AG04449 (cell line): ENCODE measurements at regions of chr22 and their contacts with region 1.

Region 1: GRCh38 chr22:37260901-37261336 is 16.9 kb upstream of the RAC2 start:
- DNase-seq: no peak
- H3K4me3 ChIP-seq: no peak overlapping the region
- CTCF ChIP-seq: peak; percentile 92

Region 2: GRCh38 chr22:37166675-37167066 is 94.2 kb before region 1 on chr22:
- CTCF ChIA-PET with region 1: interaction called, 31 read pairs
- POLR2A ChIA-PET with region 1: no interaction called
- DNase-seq: no peak
- H3K4me3 ChIP-seq: no peak overlapping the region
- CTCF ChIP-seq: peak; percentile 93

Region 3: GRCh38 chr22:37199103-37199759 is 61.7 kb before region 1 on chr22:
- CTCF ChIA-PET with region 1: interaction called, 31 read pairs
- POLR2A ChIA-PET with region 1: no interaction called
- DNase-seq: peak; percentile 76
- H3K4me3 ChIP-seq: peak overlapping the region; percentile 78
- CTCF ChIP-seq: peak; percentile 99

Region 4: GRCh38 chr22:37229805-37230672 is 30.9 kb before region 1 on chr22:
- CTCF ChIA-PET with region 1: interaction called, 41 read pairs
- POLR2A ChIA-PET with region 1: interaction called, 5 read pairs
- DNase-seq: no peak
- H3K4me3 ChIP-seq: no peak overlapping the region
- CTCF ChIP-seq: no peak

Region 5: GRCh38 chr22:37282385-37282677 is 21.4 kb after region 1 on chr22 and contains the start of gene CYTH4:
- CTCF ChIA-PET with region 1: interaction called, 89 read pairs
- POLR2A ChIA-PET with region 1: no interaction called
- DNase-seq: no peak
- H3K4me3 ChIP-seq: no peak within 1 kb of the TSS
- CTCF ChIP-seq: no peak

Region 6: DNA sequence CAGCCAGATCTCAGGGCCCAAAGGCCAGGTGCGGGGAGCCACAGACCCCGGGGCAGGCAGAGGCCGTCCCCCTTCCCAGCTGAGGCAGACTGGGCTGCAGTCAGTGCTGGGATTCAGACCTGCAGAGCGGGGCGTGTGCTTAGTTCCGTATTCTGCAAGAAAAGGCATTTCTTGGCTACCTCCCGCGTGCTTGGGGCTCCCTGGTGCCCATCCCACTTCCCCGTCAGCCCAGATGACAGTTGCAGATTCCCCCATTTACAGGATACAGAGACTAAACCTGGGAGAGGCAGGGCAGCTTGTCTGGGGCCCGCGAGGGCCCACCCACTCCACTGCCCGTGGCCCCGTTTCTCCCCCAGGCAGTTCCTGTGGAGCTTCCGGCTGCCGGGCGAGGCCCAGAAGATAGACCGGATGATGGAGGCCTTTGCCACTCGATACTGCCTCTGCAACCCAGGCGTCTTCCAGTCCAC is 39.7 kb after region 1 on chr22:
- CTCF ChIA-PET with region 1: interaction called, 16 read pairs
- POLR2A ChIA-PET with region 1: interaction called, 3 read pairs
- DNase-seq: no peak
- H3K4me3 ChIP-seq: no peak overlapping the region
- CTCF ChIP-seq: no peak

Region 7: GRCh38 chr22:37457093-37457893 is 196.4 kb after region 1 on chr22:
- CTCF ChIA-PET with region 1: interaction called, 81 read pairs
- POLR2A ChIA-PET with region 1: no interaction called
- DNase-seq: no peak
- H3K4me3 ChIP-seq: no peak overlapping the region
- CTCF ChIP-seq: peak; percentile 90